B cell (primary cell): ENCODE measurements at regions of chr7 and their contacts with region 1.

Region 1: DNA sequence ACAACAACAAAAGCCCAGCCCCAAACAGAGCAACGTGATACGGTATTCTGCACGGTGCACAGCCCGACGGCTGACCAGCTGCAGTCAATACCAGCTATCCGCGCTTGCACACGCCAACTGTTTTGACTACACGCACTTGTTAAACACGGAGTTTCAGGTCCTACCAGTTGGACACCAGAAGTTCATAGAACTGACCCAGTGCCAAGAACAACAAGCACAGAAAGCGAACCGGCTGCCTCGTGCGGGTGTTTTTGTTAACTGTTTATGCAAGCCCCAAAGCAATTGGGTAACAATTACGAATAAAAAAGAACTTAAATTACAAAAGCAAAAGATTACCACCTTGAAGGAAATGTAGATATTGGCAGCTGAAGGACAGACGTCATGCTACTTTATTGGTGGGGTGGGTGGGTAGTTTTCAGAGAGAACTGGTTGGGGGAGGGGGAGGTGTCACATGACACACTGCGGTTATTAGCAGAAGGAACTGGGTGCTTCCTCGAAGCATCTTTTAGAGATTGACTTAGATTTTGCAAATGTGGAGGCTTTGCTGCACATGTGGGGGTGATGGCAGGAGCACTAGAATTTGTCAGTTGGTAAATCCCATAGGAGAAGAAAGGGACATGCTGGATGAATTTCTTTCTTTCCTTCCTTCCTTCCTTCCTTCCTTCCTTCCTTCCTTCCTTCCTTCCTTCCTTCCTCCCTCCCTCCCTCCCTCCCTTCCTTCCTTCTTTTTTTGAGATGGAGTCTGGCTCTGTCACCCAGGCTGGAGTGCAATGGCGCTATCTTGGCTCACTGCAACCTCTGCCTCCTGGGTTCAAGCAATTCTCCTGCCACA is 110.7 kb upstream of the EFCAB10 start:
- DNase-seq: peak; percentile 90
- ATAC-seq: peak; percentile 77
- H3K4me3 ChIP-seq: peak overlapping the region; percentile 61 to 94 (median 80)
- H3K4me3 Mint-ChIP-seq: peak overlapping the region; percentile 95
- H3K27ac ChIP-seq: peak overlapping the region; percentile 90 to 97
- H3K27ac Mint-ChIP-seq: peak overlapping the region; percentile 99
- H3K4me1 ChIP-seq: peaks cover 5 to 29% of the 10 kb centered on the region in 2 donors
- H3K4me1 Mint-ChIP-seq: peaks cover 54% of the 10 kb centered on the region
- H3K27me3 ChIP-seq: no peaks in the 10 kb centered on the region
- H3K27me3 Mint-ChIP-seq: no peaks in the 10 kb centered on the region
- CTCF ChIP-seq: no peak

Region 2: GRCh38 chr7:105678811-105679495 is 13.0 kb before region 1 on chr7:
- CTCF ChIA-PET with region 1: interaction called, 13 read pairs
- POLR2A ChIA-PET with region 1: interaction called, 5 read pairs
- intact Hi-C with region 1: loop called (anchors 1 kb)
- DNase-seq: peak; percentile 70
- ATAC-seq: peak; percentile 44
- H3K4me3 ChIP-seq: peak overlapping the region; percentile 48 to 82 (median 65)
- H3K4me3 Mint-ChIP-seq: peak overlapping the region; percentile 96
- H3K27ac ChIP-seq: peak overlapping the region; percentile 56 to 70
- H3K27ac Mint-ChIP-seq: peak overlapping the region; percentile 94
- H3K4me1 ChIP-seq: peaks cover 37 to 45% of the 10 kb centered on the region in 2 donors
- H3K4me1 Mint-ChIP-seq: peaks cover 57% of the 10 kb centered on the region
- H3K27me3 ChIP-seq: no peaks in the 10 kb centered on the region
- H3K27me3 Mint-ChIP-seq: no peaks in the 10 kb centered on the region
- CTCF ChIP-seq: no peak

Region 3: GRCh38 chr7:105707967-105708762 is 16.2 kb after region 1 on chr7:
- CTCF ChIA-PET with region 1: no interaction called
- POLR2A ChIA-PET with region 1: no interaction called
- intact Hi-C with region 1: no loop called
- DNase-seq: no peak
- ATAC-seq: no peak
- H3K4me3 ChIP-seq: no peak overlapping the region
- H3K4me3 Mint-ChIP-seq: no peak overlapping the region
- H3K27ac ChIP-seq: no peak overlapping the region
- H3K27ac Mint-ChIP-seq: no peak overlapping the region
- H3K4me1 ChIP-seq: no peaks in the 10 kb centered on the region
- H3K4me1 Mint-ChIP-seq: peaks cover 5% of the 10 kb centered on the region
- H3K27me3 ChIP-seq: no peaks in the 10 kb centered on the region
- H3K27me3 Mint-ChIP-seq: peaks cover 5% of the 10 kb centered on the region
- CTCF ChIP-seq: no peak

Region 4: DNA sequence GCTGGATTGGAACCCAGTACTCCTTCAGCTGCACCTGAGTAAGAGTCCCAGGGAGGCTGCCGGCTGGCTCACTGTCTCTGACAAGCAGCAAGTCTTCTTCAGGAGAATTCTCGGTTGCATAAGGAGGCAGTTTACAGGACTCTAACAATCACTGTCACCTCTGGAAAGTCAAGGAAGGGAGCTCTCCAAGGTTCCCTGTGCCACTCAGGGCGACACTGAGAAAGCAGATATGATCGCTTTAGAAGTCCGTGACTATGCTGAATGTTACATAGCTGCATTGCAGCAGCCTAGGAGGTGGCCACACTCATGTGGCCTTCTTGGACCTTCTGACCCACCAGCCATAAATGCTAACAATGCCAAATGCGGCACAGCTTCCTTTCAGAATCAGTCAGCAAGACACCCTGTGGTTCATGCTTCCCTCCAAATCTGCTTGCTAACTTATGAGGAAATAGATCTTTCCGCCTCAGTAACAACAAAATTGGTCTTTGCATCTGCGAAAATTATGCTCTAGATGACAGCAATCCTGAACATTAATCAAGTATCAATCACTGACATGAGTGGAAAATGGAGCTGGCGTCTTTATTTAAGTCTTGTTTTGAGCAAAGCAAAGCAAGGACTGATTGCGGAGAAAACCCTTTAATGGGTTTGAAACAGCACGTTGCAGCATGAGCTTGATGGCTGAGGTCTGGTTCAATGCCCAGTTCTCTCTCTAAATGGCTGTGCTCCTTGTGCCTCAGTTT is 51.6 kb after region 1 on chr7:
- CTCF ChIA-PET with region 1: interaction called, 3 read pairs
- POLR2A ChIA-PET with region 1: no interaction called
- intact Hi-C with region 1: loop called (anchors 10 kb)
- DNase-seq: peak; percentile 35
- ATAC-seq: peak; percentile 31
- H3K4me3 ChIP-seq: no peak overlapping the region
- H3K4me3 Mint-ChIP-seq: peak overlapping the region; percentile 53
- H3K27ac ChIP-seq: no peak overlapping the region
- H3K27ac Mint-ChIP-seq: no peak overlapping the region
- H3K4me1 ChIP-seq: peaks cover 14 to 15% of the 10 kb centered on the region in 2 donors
- H3K4me1 Mint-ChIP-seq: peaks cover 21% of the 10 kb centered on the region
- H3K27me3 ChIP-seq: no peaks in the 10 kb centered on the region
- H3K27me3 Mint-ChIP-seq: no peaks in the 10 kb centered on the region
- CTCF ChIP-seq: no peak

Region 5: GRCh38 chr7:105808703-105809590 is 117.0 kb after region 1 on chr7:
- CTCF ChIA-PET with region 1: no interaction called
- POLR2A ChIA-PET with region 1: interaction called, 3 read pairs
- intact Hi-C with region 1: loop called (anchors 5 kb)
- DNase-seq: peak; percentile 83
- ATAC-seq: peak; percentile 97
- H3K4me3 ChIP-seq: no peak overlapping the region
- H3K4me3 Mint-ChIP-seq: peak overlapping the region; percentile 30
- H3K27ac ChIP-seq: peak overlapping the region; percentile 38 to 58
- H3K27ac Mint-ChIP-seq: peak overlapping the region; percentile 46
- H3K4me1 ChIP-seq: peaks cover 21 to 41% of the 10 kb centered on the region in 2 donors
- H3K4me1 Mint-ChIP-seq: peaks cover 41% of the 10 kb centered on the region
- H3K27me3 ChIP-seq: no peaks in the 10 kb centered on the region
- H3K27me3 Mint-ChIP-seq: no peaks in the 10 kb centered on the region
- CTCF ChIP-seq: no peak

Region 6: DNA sequence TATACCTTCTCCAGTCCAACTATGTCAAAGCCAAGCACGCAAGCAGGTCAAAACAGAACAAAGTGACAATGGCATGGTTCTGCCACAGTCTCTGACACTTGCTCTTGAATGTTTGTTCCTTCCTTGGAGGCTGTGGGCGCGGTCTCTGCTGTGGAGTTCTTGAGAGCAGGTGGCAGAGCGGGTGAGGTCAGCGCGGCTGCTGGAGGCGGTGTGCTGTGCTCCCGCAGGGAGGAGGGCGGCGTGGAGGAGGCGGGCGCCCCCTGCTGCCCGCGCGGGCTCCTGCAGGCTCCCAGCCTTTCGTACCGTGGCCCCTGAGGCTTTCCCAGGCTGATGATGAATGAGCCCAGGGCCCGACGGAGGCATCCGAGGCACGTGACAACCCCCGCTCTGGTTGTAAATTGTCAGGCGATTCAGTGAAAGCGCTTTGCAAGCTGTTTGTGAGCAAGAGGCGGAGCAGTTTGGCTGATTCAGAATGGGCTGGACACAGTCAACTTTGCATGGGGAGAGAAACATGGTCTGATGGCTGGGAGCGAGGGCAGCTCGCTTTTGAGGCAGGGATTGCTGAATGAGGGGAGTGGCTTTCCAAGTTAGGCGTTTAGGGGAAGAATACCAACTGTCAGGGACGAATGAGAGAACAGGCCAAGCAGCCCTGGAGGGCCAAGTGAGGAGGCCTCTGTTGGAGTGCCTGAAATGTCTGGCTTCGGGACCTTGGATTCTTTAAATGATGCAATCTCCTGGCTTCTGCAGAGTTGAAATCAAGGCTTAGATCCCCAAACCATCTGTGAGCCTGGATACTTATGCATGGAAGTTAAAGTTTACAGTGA is 317.7 kb after region 1 on chr7:
- CTCF ChIA-PET with region 1: interaction called, 4 read pairs
- POLR2A ChIA-PET with region 1: no interaction called
- intact Hi-C with region 1: loop called (anchors 1 kb)
- DNase-seq: peak; percentile 80
- ATAC-seq: peak; percentile 98
- H3K4me3 ChIP-seq: no peak overlapping the region
- H3K4me3 Mint-ChIP-seq: peak overlapping the region; percentile 46
- H3K27ac ChIP-seq: no peak overlapping the region
- H3K27ac Mint-ChIP-seq: peak overlapping the region; percentile 28
- H3K4me1 ChIP-seq: peaks cover 17 to 18% of the 10 kb centered on the region in 2 donors
- H3K4me1 Mint-ChIP-seq: peaks cover 18% of the 10 kb centered on the region
- H3K27me3 ChIP-seq: peaks cover 0 to 4% (median under 1%) of the 10 kb centered on the region in 4 experiments
- H3K27me3 Mint-ChIP-seq: peaks cover 4% of the 10 kb centered on the region
- CTCF ChIP-seq: peak; percentile 88